ENCODE measurements at regions of chr21 and their contacts with region 1.

Region 1: GRCh38 chr21:14645702-14646101 is 99.6 kb upstream of the SAMSN1 start:
- DNase-seq: no peak
- H3K4me3 Mint-ChIP-seq: no peak overlapping the region
- H3K27ac Mint-ChIP-seq: no peak overlapping the region
- H3K4me1 Mint-ChIP-seq: no peaks in the 10 kb centered on the region
- H3K27me3 Mint-ChIP-seq: no peaks in the 10 kb centered on the region

Region 2: DNA sequence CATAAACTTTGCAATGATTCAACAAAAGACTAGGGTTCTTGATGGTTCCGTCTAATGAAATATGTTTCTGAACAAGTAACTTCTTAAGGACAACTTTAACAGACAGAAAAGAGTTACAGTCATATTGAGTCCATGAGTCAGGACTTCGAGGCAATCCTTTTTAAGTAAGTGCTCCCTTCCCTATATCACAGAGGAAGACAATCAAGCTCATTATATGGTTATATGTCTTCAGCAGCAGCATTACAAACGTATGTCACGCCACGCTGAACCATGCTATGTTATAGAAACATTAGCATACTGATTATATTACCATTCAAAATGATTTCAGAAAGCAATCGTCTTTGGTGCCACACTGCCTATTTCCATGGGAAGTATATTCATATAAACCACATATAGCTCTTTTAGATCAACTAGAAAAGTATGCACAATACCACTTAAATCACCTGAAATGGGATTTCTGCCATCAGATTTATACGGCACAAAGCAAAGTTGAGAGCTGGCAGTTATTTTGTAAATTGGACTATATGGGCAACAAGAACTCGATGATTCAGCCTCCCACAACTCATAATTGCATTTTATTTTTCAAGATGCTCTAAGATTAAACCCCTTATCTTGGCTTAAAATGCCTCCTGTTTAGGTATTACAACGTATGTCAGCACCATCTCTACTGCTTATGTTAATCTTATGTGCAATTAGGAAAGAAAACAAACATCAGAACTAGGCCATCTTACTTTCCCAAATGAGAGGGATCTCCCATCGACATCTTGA is 11.7 kb after region 1 on chr21:
- CTCF ChIA-PET with region 1: no interaction called
- intact Hi-C with region 1: loop called (anchors 2 kb)
- DNase-seq: no peak
- H3K4me3 Mint-ChIP-seq: no peak overlapping the region
- H3K27ac Mint-ChIP-seq: no peak overlapping the region
- H3K4me1 Mint-ChIP-seq: no peaks in the 10 kb centered on the region
- H3K27me3 Mint-ChIP-seq: no peaks in the 10 kb centered on the region

Region 3: DNA sequence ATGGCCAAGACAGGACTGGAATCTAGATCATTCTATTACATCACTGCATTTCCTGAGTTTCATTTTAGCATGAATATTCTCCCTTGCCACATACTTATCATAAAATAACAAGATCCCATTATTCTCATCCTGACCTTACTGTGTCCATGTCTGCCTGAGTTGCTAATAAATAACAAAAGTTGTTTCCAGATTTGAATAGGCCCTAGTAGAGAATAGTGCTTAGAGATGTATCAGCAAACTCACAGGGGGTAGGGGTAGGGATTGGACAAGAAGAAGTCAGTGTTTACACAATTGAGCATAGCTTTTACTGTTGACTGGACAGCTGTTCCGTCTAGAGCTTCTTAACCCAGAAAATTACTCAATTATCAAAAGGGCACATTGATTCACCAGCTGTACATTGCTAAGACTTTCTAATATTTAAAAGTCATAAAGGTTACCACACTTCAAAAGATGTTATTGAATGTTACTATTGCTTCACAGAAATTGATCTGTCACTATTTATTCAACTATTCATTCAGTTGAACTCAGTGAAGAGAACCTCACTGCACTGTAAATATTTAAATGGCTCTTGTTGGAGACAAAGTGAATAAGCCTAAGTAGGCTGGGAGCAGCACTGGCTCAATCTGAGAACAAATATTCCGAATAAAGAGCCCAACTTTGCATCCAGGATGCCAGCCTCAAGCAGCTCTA is 297.2 kb after region 1 on chr21:
- CTCF ChIA-PET with region 1: no interaction called
- intact Hi-C with region 1: no loop called
- DNase-seq: no peak
- H3K4me3 Mint-ChIP-seq: no peak overlapping the region
- H3K27ac Mint-ChIP-seq: no peak overlapping the region
- H3K4me1 Mint-ChIP-seq: no peaks in the 10 kb centered on the region
- H3K27me3 Mint-ChIP-seq: no peaks in the 10 kb centered on the region

Measured in activated naive CD4-positive, alpha-beta T cell treated with anti-CD3 and anti-CD28 coated beads for 36 hours (primary cell).